GM10248 (cell line): ENCODE measurements at regions of chr7 and their contacts with region 1.

Region 1: DNA sequence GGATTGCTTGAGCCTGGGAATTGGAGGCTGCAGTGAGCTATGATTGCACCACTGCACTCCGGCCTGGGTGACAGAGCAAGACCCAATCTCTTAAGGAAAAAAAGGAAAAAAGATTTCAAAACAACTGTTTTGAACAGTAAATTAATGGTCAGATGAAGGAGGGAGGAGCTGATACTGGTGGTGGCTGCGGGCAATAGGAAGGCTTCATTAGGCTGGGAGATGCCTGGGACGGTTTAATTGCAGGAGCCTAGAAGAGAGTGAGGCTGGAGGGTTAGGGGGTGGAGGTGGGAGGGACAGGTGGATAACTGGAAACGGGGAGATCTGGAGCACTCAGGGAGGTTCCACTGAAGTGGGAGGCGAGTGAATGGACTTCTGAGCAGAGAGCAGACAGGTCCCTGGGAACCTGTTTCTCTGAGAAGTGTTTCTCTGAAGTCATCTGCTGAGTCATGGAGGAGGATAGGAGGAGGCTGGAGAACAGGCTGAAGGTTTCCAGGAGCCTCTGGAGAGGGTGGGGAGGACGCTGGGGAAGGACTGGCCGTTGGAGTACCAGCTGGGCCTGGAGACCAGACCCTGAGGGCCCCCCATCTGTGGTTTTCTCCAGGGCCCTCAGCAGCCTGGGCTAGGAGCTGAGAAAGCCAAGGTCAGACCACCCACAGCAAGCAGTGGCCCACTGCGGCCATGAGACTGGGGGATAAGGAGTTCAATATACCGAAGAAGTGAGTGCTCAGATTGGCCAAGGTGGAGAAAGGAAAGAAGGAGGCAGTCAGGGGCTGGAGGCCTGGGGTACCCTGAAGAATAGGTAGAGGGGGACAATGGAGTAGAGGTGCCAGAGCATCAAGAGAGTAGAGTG is 14.4 kb upstream of the YWHAG start:
- DNase-seq: no peak
- CTCF ChIP-seq: no peak

Region 2: DNA sequence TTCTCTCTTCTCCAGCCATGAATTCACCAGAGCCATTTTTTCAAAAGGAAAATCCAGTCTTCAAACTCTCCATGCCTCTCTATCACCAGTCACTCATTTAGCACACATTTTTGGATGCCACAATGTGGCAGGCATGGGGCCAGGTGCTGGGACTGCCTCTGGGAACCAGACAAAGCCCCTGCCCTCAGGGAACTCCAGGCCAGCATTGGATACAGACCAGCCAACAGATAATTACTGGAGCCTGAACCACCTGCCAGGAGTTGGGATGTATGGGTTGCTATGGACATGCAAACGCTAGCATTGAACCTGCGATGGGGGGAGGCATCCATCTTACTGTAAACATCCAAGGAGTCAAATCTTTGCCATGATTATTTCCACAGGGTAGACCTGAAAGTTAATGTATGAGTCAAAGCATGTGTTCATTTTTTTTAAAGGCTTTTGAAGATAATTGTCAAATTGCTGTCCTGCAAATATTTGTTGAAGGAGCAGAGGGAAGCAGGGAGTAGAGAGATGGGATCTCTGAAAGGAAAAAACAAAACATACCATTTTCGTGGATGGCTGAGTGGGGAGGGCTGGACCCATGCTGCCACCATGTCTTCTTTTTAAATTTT is 128.3 kb before region 1 on chr7:
- CTCF ChIA-PET with region 1: no interaction called
- POLR2A ChIA-PET with region 1: no interaction called
- DNase-seq: no peak
- CTCF ChIP-seq: no peak

Region 3: GRCh38 chr7:76359111-76359978 is 13.9 kb before region 1 on chr7:
- CTCF ChIA-PET with region 1: interaction called, 30 read pairs
- POLR2A ChIA-PET with region 1: interaction called, 3 read pairs
- DNase-seq: peak; percentile 97
- CTCF ChIP-seq: peak; percentile 82